Gastrocnemius medialis (tissue), 4 donors: ENCODE measurements at regions of chr7 and their contacts with region 1.

Region 1: DNA sequence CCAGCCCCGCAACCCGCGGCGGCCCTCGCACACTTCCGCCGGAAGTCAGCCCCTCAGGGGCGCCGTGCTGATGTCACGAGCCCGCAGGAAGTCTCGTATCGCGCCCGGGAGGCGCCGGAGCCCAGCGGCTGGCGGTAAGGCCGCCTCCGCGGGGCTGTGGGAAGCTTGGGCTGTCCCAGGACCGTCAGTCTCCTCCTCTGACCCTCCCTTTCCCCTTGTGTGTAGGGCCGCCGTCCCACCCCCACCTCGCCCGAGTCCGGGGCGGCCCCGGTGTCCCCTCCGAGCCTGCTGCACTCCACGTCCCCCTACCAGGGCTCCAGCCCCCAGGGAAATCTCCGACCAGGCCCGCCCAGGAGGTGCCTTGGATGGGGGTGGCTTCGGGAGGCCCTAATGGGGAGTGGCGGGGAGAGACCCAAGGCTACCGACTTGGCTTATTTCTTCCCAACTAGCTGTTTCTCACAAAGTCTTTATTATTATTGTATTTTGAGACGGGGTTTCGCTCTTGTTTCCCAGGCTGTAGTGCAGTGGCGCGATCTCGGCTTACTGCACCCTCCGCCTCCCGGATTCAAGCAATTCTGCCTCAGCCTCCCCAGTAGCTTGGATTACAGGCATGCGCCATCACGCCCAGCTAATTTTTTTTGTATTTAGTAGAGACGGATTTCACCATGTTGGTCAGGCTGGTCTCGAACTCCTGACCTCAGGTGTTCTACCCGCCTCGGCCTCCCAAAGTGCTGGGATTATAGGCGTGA is at the start of gene ZDHHC4:
- DNase-seq: peak; percentile 69 to 84
- ATAC-seq: peak; percentile 94 to 97
- H3K4me3 ChIP-seq: peak within 1 kb of the TSS; percentile 70 to 88 (median 77)
- H3K27ac ChIP-seq: peak within 1 kb of the TSS; percentile 85 to 95 (median 92)
- H3K4me1 ChIP-seq: peaks cover 0 to 5% of the 10 kb centered on the region in 2 donors
- H3K27me3 ChIP-seq: no peaks in the 10 kb centered on the region
- CTCF ChIP-seq: no peak
- POLR2A ChIP-seq: peak; percentile 87 to 92
- total RNA-seq, gene ZDHHC4: 52.7 to 88.6 (median 70.5) TPM

Region 2: GRCh38 chr7:6516387-6516983 is 61.1 kb before region 1 on chr7:
- in situ Hi-C with region 1: no loop called
- intact Hi-C with region 1: loop called (anchors 10 kb)
- DNase-seq: peak; percentile 54 to 75
- ATAC-seq: peak; percentile 87 to 95
- H3K4me3 ChIP-seq: peak overlapping the region; percentile 27 to 63 (median 38)
- H3K27ac ChIP-seq: peak overlapping the region in 2 of 4 donors; percentile 27 to 54
- H3K4me1 ChIP-seq: no peaks in the 10 kb centered on the region
- H3K27me3 ChIP-seq: peaks cover 0 to 2% (median 0%) of the 10 kb centered on the region in 3 donors
- CTCF ChIP-seq: peak; percentile 67 to 88 (median 70)
- POLR2A ChIP-seq: no peak